Activated CD4-positive, alpha-beta T cell treated with anti-CD3 and anti-CD28 coated beads for 36 hours (primary cell): ENCODE measurements at regions of chr11 and their contacts with region 1.

Region 1: GRCh38 chr11:46238967-46239800 is 38.3 kb upstream of the CREB3L1 start:
- DNase-seq: peak; percentile 90
- ATAC-seq: peak; percentile 70
- H3K4me3 Mint-ChIP-seq: peak overlapping the region; percentile 70
- H3K27ac Mint-ChIP-seq: peak overlapping the region; percentile 6
- H3K4me1 Mint-ChIP-seq: peaks cover 36% of the 10 kb centered on the region
- H3K27me3 Mint-ChIP-seq: peaks cover 11% of the 10 kb centered on the region

Region 2: GRCh38 chr11:45917623-45918330 is 321.4 kb before region 1 on chr11 and contains the start of gene PEX16:
- CTCF ChIA-PET with region 1: no interaction called
- POLR2A ChIA-PET with region 1: interaction called, 7 read pairs
- intact Hi-C with region 1: loop called in 1 of 2 experiments (anchors 1 kb)
- DNase-seq: peak; percentile 97
- ATAC-seq: peak; percentile 94
- H3K4me3 Mint-ChIP-seq: peak within 1 kb of the TSS; percentile 96
- H3K27ac Mint-ChIP-seq: peak within 1 kb of the TSS; percentile 95
- H3K4me1 Mint-ChIP-seq: peaks cover 31% of the 10 kb centered on the region
- H3K27me3 Mint-ChIP-seq: peaks cover 3% of the 10 kb centered on the region
- total RNA-seq, gene PEX16: 28.1 to 33.4 TPM

Region 3: GRCh38 chr11:46114961-46115360 is 124.2 kb before region 1 on chr11:
- CTCF ChIA-PET with region 1: interaction called, 19 read pairs
- POLR2A ChIA-PET with region 1: no interaction called
- intact Hi-C with region 1: no loop called
- DNase-seq: no peak
- ATAC-seq: no peak
- H3K4me3 Mint-ChIP-seq: no peak overlapping the region
- H3K27ac Mint-ChIP-seq: peak overlapping the region; percentile 48
- H3K4me1 Mint-ChIP-seq: peaks cover 55% of the 10 kb centered on the region
- H3K27me3 Mint-ChIP-seq: no peaks in the 10 kb centered on the region

Region 4: DNA sequence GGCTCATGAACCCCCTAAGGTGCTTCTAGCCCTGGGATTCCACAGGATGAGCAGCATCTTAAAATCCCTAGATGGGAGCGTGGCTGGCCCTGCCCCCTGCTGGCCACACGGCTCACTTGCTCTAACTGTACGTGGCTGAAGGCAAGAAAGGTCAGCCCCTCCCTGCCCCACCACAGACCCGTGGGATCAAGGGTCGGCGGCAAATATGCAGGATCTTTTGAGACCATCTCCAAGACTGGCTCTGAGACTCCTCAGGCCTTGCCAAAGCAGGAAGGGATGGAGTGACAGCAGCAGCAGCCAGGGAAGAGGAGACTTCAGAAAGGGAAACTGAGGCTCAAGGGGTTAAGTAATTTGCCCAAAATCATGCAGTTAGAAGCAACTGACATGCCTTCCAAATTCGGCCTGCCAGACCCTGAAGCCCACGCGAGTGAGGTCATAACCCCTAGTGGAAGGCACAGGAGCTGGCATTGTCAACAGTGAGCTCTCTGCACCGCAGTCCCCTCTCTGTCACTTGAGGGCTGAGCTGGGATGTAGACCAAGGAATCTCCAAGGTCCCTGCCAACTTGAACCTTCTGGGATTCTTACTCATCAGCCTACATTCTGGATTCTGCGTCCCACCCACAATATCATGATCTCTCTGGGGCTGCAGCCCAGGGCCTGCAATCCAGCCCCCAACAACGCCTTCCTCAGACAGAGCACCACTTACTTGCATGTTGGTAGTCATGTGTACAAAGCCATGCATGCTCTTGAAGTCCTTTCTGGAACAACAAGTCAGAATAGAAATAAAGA is 69.6 kb after region 1 on chr11:
- CTCF ChIA-PET with region 1: interaction called, 230 read pairs
- POLR2A ChIA-PET with region 1: interaction called, 4 read pairs
- intact Hi-C with region 1: loop called (anchors 1 kb)
- DNase-seq: peak; percentile 85
- ATAC-seq: peak; percentile 86
- H3K4me3 Mint-ChIP-seq: no peak overlapping the region
- H3K27ac Mint-ChIP-seq: no peak overlapping the region
- H3K4me1 Mint-ChIP-seq: peaks cover 5% of the 10 kb centered on the region
- H3K27me3 Mint-ChIP-seq: no peaks in the 10 kb centered on the region

Region 5: GRCh38 chr11:46322759-46323158 is 83.6 kb after region 1 on chr11:
- CTCF ChIA-PET with region 1: interaction called, 13 read pairs
- POLR2A ChIA-PET with region 1: no interaction called
- intact Hi-C with region 1: no loop called
- DNase-seq: peak; percentile 63
- ATAC-seq: peak; percentile 52
- H3K4me3 Mint-ChIP-seq: no peak overlapping the region
- H3K27ac Mint-ChIP-seq: no peak overlapping the region
- H3K4me1 Mint-ChIP-seq: peaks cover 18% of the 10 kb centered on the region
- H3K27me3 Mint-ChIP-seq: no peaks in the 10 kb centered on the region

Region 6: DNA sequence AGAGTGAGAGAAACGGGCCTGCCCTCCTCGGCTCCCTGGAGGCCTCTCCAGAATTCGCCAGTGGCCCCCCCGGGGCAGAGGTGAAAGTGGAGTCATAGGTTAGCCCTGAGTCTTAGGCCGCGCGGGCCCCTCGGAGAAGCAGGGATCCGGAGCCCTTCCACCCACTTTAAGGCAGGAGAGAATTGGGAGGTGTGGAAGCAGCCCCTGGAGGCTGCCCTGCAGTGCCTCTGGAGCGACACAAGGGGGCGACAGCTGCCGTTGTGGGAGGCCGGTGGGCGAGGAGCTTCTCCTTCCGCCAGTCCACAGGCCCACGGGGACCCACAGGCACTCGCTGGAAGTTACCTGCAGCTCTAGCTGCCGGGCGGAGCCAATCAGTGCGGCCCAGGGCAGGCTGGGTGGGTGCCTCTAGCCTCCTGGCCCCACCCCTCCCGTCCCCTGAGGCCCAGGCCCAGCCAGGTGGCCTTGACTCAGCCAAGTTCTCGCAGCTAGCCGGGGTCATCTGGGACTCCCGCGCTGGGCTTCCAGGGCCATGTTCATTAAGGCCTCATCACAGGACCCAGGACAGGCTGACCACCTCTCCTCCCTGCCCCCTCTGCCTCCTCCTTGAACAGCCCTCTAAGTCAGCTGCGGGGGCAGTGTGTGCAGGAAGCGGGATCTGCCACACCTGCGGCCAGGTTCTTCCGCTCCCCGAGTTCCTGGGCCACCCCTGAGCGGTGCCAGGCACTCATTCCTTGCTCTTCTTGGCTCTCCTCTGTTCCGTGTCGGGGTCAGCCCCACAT is 113.1 kb after region 1 on chr11:
- CTCF ChIA-PET with region 1: interaction called, 22 read pairs
- POLR2A ChIA-PET with region 1: interaction called, 3 read pairs
- intact Hi-C with region 1: loop called in 1 of 2 experiments (anchors 1 kb)
- DNase-seq: peak; percentile 88
- ATAC-seq: peak; percentile 39
- H3K4me3 Mint-ChIP-seq: peak overlapping the region; percentile 76
- H3K27ac Mint-ChIP-seq: peak overlapping the region; percentile 94
- H3K4me1 Mint-ChIP-seq: peaks cover 82% of the 10 kb centered on the region
- H3K27me3 Mint-ChIP-seq: no peaks in the 10 kb centered on the region

Region 7: DNA sequence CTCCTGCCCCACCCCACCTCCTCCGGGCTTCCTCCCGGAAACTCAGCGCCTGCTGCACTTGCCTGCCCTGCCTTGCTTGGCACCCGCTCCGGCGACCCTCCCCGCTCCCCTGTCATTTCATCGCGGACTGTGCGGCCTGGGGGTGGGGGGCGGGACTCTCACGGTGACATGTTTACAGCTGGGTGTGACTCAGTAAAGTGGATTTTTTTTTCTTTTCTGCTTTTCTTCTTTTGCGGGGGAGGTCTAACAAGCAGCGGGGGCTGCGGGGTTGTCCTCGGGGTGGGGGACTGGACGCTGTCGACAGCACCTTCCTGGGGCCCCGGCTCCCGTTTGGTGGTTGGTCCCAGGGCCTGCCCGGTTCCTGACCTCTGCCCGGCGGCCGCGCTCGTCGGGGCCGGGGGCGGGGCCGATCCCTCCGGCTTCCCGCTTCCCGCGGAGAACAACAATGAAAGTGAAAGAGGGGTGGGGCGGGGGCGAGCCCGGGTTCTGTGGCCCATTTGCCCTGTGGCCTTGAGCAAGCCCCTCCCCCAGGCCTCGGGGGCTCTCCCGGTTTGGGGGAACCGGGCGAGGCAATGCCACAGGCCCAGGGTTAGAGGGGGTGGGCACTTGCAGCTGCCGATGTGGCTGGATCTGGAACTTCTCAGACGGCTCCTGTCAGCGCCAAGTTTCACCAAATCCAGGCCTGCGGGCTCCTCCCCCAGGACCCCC is 141.3 kb after region 1 on chr11:
- CTCF ChIA-PET with region 1: interaction called, 4 read pairs
- POLR2A ChIA-PET with region 1: no interaction called
- intact Hi-C with region 1: loop called in 1 of 2 experiments (anchors 5 kb)
- DNase-seq: peak; percentile 90
- ATAC-seq: peak; percentile 65
- H3K4me3 Mint-ChIP-seq: peak overlapping the region; percentile 72
- H3K27ac Mint-ChIP-seq: peak overlapping the region; percentile 58
- H3K4me1 Mint-ChIP-seq: peaks cover 8% of the 10 kb centered on the region
- H3K27me3 Mint-ChIP-seq: peaks cover 8% of the 10 kb centered on the region